Mammary epithelial cell (primary cell): ENCODE measurements at regions of chr20 and their contacts with region 1.

Region 1: GRCh38 chr20:21505161-21505809 is 8.6 kb downstream of the NKX2-2 start:
- DNase-seq: peak; percentile 55
- H3K4me3 ChIP-seq: peak overlapping the region; percentile 55 to 67 (median 61)
- H3K27ac ChIP-seq: no peak overlapping the region
- H3K4me1 ChIP-seq: peaks cover 12% of the 10 kb centered on the region
- H3K27me3 ChIP-seq: peaks cover 27% of the 10 kb centered on the region
- CTCF ChIP-seq: peak; percentile 93 to 98

Region 2: GRCh38 chr20:20837574-20838021 is 667.7 kb before region 1 on chr20:
- CTCF ChIA-PET with region 1: no interaction called
- dilution Hi-C with region 1: no loop called
- in situ Hi-C with region 1: no loop called
- intact Hi-C with region 1: loop called (anchors 1 kb)
- DNase-seq: no peak
- H3K4me3 ChIP-seq: no peak overlapping the region
- H3K27ac ChIP-seq: no peak overlapping the region
- H3K4me1 ChIP-seq: no peaks in the 10 kb centered on the region
- H3K27me3 ChIP-seq: peaks cover 2% of the 10 kb centered on the region
- CTCF ChIP-seq: peak; percentile 58 to 63

Region 3: DNA sequence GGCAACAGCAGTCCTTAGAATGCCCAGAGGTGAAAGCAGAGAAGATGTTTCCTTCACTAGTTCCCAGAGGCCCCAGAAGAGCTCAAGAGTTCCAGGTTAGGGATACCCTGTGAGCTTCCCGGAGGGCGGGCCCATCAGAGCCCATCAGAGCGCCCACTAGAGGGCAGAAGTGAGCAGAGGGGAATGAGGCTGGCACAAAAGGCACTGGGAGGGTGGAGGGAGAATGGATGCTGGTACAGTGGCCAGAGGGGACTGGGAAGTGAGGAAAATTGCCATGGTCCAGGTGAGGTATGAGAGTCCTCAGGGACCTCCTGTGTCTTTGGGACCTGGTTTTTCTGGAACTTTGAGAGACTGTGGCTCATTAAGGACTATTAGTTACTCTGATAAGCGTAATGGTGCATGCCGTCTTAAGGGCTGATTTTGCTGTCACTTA is 456.4 kb before region 1 on chr20:
- CTCF ChIA-PET with region 1: no interaction called
- dilution Hi-C with region 1: no loop called
- in situ Hi-C with region 1: no loop called
- intact Hi-C with region 1: loop called (anchors 2 kb)
- DNase-seq: no peak
- H3K4me3 ChIP-seq: no peak overlapping the region
- H3K27ac ChIP-seq: no peak overlapping the region
- H3K4me1 ChIP-seq: no peaks in the 10 kb centered on the region
- H3K27me3 ChIP-seq: no peaks in the 10 kb centered on the region
- CTCF ChIP-seq: peak; percentile 82 to 87

Region 4: DNA sequence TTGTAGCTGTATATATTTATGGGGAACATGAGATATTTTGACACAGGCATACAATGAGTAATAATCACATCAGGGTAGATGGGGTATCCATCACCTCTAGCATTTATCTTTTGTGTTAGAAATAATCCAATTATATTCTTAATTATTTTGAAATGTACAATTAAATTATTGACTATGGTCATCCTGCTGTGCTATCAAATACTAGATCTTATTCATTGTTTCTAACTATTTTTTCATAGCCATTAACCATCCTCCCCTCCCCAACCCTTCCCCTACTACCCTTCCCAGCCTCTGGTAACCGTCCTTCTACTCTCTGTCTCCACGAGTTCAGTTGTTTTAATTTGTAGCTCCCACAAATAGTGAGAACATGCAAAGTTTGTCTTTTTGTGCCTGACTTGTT is 136.5 kb before region 1 on chr20:
- CTCF ChIA-PET with region 1: no interaction called
- dilution Hi-C with region 1: no loop called
- in situ Hi-C with region 1: no loop called
- intact Hi-C with region 1: no loop called
- DNase-seq: no peak
- H3K4me3 ChIP-seq: no peak overlapping the region
- H3K27ac ChIP-seq: no peak overlapping the region
- H3K4me1 ChIP-seq: no peaks in the 10 kb centered on the region
- H3K27me3 ChIP-seq: no peaks in the 10 kb centered on the region
- CTCF ChIP-seq: no peak

Region 5: DNA sequence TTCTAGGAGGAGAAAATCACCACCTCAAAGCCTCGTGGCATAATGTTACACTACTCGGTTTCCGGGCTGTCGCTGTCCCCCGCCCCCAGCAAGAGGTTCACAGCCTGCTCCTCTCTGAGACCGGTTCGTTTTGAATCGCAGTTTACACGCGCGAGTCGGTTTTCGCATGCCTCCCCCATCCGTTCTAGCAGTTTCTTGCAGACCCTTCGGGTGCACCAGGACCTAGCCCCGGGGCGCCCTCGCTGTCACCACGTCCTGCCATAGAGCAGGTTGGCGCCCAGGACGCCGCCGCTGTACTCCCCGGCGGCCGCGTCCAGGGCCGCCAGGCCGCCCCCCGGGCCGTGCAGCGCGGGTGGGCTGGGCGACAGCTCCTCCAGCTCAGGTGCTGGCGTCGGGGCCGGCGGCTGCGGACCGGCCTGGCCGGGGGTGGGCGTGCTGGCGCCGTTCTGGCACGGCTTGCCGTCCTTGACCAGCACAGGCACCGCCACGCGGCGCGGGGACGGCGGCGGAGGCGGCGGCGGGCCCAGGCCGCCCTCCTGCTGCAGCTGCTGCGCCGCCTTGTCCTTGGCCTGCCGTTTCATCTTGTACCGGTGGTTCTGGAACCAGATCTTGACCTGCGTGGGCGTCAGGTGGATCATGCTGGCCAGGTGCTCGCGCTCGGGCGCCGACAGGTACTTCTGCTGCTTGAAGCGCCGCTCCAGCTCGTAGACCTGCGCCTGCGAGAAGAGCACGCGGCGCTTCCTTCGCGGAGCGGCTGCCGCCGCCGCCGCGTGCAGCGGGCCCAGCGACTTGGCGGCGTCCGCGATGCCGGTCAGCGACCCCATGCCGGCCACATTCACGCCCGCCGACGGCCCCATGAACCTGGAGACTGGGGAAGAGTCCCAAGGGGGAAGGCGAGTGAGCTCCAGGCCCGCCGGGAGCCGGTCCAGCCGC is 109.4 kb before region 1 on chr20:
- CTCF ChIA-PET with region 1: no interaction called
- dilution Hi-C with region 1: loop called (anchors 5 kb)
- in situ Hi-C with region 1: no loop called
- intact Hi-C with region 1: no loop called
- DNase-seq: peak; percentile 25
- H3K4me3 ChIP-seq: no peak overlapping the region
- H3K27ac ChIP-seq: no peak overlapping the region
- H3K4me1 ChIP-seq: peaks cover 9% of the 10 kb centered on the region
- H3K27me3 ChIP-seq: peaks cover 46% of the 10 kb centered on the region
- CTCF ChIP-seq: no peak

Region 6: GRCh38 chr20:21615617-21616080 is 110.4 kb after region 1 on chr20:
- CTCF ChIA-PET with region 1: no interaction called
- dilution Hi-C with region 1: no loop called
- in situ Hi-C with region 1: no loop called
- intact Hi-C with region 1: loop called (anchors 1 kb)
- DNase-seq: peak; percentile 43
- H3K4me3 ChIP-seq: no peak overlapping the region
- H3K27ac ChIP-seq: no peak overlapping the region
- H3K4me1 ChIP-seq: no peaks in the 10 kb centered on the region
- H3K27me3 ChIP-seq: peaks cover 2% of the 10 kb centered on the region
- CTCF ChIP-seq: peak; percentile 87 to 95